ENCODE measurements at regions of chr2 and their contacts with region 1.

Region 1: DNA sequence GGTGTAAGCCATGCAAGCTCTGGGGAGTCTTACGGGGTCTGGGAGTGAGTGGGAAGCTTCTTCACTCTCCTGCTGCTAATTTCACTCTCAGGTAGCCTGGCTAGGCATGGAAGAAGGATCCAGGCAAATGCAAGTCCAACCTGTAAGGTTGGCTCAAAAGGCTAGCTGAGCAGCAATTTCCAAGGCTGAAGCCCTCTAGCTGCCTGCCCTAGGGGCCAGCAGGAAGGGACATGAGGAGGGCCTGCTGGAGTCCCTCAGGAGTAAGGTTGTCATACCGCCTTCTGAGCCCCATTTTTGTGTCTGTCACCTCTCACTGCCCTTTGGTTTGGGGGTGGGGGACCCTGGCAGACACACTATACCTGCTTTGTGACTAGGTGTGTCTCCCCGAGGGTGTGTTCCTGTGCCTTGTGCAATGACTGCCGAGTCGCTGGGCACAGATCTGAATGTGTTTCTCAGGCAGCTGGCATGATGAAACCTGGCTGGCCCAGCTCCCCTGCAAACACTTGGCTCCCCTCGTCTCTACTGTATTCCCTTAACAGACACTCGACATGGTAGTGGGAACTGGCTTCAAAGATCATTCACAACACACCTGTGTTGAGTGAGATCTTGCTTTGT is 123.9 kb upstream of the FAM136A start:
- DNase-seq: no peak
- H3K4me3 ChIP-seq: no peak overlapping the region
- H3K27ac ChIP-seq: no peak overlapping the region
- H3K4me1 ChIP-seq: no peaks in the 10 kb centered on the region
- H3K27me3 ChIP-seq: peaks cover 0 to 10% (median 2%) of the 10 kb centered on the region in 4 experiments; a peak in 4 of 7 replicates
- CTCF ChIP-seq: no peak
- EP300 ChIP-seq: no peak
- POLR2A ChIP-seq: no peak
- RAD21 ChIP-seq: no peak

Region 2: GRCh38 chr2:70412294-70413070 is 13.3 kb before region 1 on chr2:
- CTCF ChIA-PET with region 1: interaction called, 11 read pairs
- POLR2A ChIA-PET with region 1: no interaction called
- DNase-seq: no peak
- H3K4me3 ChIP-seq: no peak overlapping the region
- H3K27ac ChIP-seq: no peak overlapping the region
- H3K4me1 ChIP-seq: no peaks in the 10 kb centered on the region
- H3K27me3 ChIP-seq: peaks cover 0 to 2% (median 0%) of the 10 kb centered on the region in 4 experiments; a peak in 1 of 7 replicates
- CTCF ChIP-seq: no peak
- EP300 ChIP-seq: no peak
- POLR2A ChIP-seq: no peak
- RAD21 ChIP-seq: no peak

Region 3: DNA sequence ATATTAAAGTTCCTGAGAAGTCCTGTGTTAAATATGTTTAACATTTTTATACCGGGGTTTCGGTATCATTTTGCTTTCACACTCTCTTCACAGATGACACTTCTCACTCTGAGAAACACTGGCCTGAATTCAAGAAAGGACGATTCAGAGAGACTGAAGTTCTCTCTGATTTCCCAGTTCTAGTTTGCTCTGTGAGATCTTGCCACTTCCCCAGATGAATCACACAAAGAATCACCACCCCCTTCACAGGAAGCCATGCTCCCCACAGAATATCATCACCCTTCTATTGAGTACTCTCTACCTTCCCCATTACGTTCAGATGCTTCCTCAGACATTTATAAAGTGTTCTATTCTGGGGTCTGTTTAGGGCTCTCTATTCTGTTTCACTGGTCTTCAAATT is 425.9 kb after region 1 on chr2:
- CTCF ChIA-PET with region 1: no interaction called
- POLR2A ChIA-PET with region 1: no interaction called
- DNase-seq: no peak
- H3K4me3 ChIP-seq: no peak overlapping the region
- H3K27ac ChIP-seq: no peak overlapping the region
- H3K4me1 ChIP-seq: no peaks in the 10 kb centered on the region
- H3K27me3 ChIP-seq: no peaks in the 10 kb centered on the region
- CTCF ChIP-seq: no peak
- EP300 ChIP-seq: no peak
- POLR2A ChIP-seq: no peak
- RAD21 ChIP-seq: no peak